Activated CD4-positive, alpha-beta T cell treated with anti-CD3 and anti-CD28 coated beads for 36 hours (primary cell): ENCODE measurements at regions of chr10 and their contacts with region 1.

Region 1: DNA sequence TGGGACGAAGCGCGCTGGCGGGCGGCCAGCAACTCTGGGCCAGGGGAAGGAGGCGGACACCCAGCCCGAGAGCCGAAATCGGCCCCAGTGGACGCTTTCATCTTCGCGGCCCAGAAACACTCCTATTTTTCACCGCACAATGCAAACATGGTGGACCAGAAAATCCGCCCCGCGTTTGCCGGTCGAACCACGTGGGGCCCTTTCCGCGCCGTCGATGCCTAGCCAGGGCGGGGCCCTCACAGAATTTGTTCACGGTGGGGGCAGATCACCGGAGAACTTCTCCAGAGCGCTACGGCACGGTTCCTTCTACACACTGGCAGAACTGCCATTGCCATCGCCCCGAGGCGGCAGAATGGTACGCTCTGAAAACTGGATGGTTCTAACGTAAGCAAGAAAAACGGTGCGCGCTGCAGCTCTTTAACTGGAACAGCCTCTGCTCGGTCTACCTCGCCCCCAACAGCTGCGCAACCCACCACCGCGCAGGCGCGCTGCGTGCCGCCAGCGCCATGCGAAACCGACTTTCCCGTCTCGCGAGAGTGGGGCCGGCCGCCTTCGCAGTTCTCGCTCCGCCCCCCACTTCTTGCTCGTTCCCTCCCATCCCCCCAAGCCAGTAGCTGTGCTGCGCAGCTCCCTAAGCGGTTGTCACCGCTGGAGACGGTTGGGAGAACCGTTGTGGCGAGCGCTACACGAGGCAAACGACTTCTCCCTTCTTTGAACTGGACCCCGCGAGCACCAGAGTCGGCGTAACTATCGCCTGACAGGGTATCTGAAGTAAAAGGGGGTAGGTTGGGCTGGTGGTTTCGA is at the start of gene HNRNPH3:
- DNase-seq: peak; percentile 99
- ATAC-seq: peak; percentile 88
- H3K4me3 Mint-ChIP-seq: peak within 1 kb of the TSS; percentile 97
- H3K27ac Mint-ChIP-seq: peak within 1 kb of the TSS; percentile 100
- H3K4me1 Mint-ChIP-seq: peaks cover 41% of the 10 kb centered on the region
- H3K27me3 Mint-ChIP-seq: no peaks in the 10 kb centered on the region
- total RNA-seq, gene HNRNPH3: 126 to 157 TPM

Region 2: GRCh38 chr10:67849331-67850011 is 482.2 kb before region 1 on chr10:
- CTCF ChIA-PET with region 1: no interaction called
- POLR2A ChIA-PET with region 1: no interaction called
- intact Hi-C with region 1: loop called in 1 of 2 experiments (anchors 1 kb)
- DNase-seq: peak; percentile 96
- ATAC-seq: peak; percentile 97
- H3K4me3 Mint-ChIP-seq: peak overlapping the region; percentile 86
- H3K27ac Mint-ChIP-seq: peak overlapping the region; percentile 95
- H3K4me1 Mint-ChIP-seq: peaks cover 12% of the 10 kb centered on the region
- H3K27me3 Mint-ChIP-seq: no peaks in the 10 kb centered on the region

Region 3: GRCh38 chr10:68074775-68075549 is 256.7 kb before region 1 on chr10 and contains the start of gene HERC4:
- CTCF ChIA-PET with region 1: no interaction called
- POLR2A ChIA-PET with region 1: no interaction called
- intact Hi-C with region 1: loop called (anchors 1 to 2 kb)
- DNase-seq: peak; percentile 94
- ATAC-seq: peak; percentile 83
- H3K4me3 Mint-ChIP-seq: peak within 1 kb of the TSS; percentile 98
- H3K27ac Mint-ChIP-seq: peak within 1 kb of the TSS; percentile 93
- H3K4me1 Mint-ChIP-seq: peaks cover 31% of the 10 kb centered on the region
- H3K27me3 Mint-ChIP-seq: no peaks in the 10 kb centered on the region
- total RNA-seq, gene HERC4: 39.5 to 50.8 TPM

Region 4: GRCh38 chr10:68348265-68348741 is 16.6 kb after region 1 on chr10:
- CTCF ChIA-PET with region 1: interaction called, 13 read pairs
- POLR2A ChIA-PET with region 1: interaction called, 29 read pairs
- intact Hi-C with region 1: loop called in 1 of 2 experiments (anchors 1 kb)
- DNase-seq: peak; percentile 63
- ATAC-seq: peak; percentile 73
- H3K4me3 Mint-ChIP-seq: no peak overlapping the region
- H3K27ac Mint-ChIP-seq: peak overlapping the region; percentile 51
- H3K4me1 Mint-ChIP-seq: peaks cover 7% of the 10 kb centered on the region
- H3K27me3 Mint-ChIP-seq: no peaks in the 10 kb centered on the region

Region 5: DNA sequence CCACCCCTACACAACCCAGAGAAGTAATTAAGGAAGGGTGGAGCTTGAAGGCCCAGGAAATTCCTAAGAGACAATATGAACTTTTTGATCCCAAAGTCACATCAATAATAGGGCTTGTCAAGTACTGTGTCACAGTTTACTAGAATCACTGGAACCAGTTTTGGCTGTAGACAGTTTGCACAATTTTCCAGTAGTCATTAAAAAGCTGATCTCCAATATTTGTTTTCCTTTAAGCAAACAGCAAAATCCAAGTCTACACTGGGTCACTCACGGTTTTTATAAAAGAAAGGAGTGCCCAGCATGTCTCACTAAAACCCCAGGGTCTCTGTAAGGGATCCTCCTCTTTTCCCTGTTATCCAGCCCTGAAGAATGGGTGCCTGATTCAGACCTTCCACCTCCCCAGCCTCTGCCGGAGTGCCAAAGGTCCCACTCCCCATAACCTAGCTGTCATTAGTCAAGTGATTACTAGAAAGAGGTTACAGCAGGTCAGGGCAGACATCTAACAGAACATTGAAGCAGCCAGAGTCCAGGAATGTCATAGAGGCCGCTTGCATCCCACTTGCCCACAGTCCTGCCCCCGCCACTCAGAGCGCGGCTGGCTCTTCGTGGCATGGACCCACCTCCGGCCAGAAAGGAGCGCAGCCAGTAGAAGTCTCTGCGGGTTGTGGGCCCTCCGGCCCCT is 195.1 kb after region 1 on chr10:
- CTCF ChIA-PET with region 1: no interaction called
- POLR2A ChIA-PET with region 1: interaction called, 3 read pairs
- intact Hi-C with region 1: loop called in 1 of 2 experiments (anchors 1 kb)
- DNase-seq: no peak
- ATAC-seq: peak; percentile 16
- H3K4me3 Mint-ChIP-seq: peak overlapping the region; percentile 93
- H3K27ac Mint-ChIP-seq: peak overlapping the region; percentile 88
- H3K4me1 Mint-ChIP-seq: peaks cover 9% of the 10 kb centered on the region
- H3K27me3 Mint-ChIP-seq: no peaks in the 10 kb centered on the region

Region 6: GRCh38 chr10:68955832-68956532 is 624.3 kb after region 1 on chr10 and contains the start of gene DDX21:
- CTCF ChIA-PET with region 1: no interaction called
- POLR2A ChIA-PET with region 1: no interaction called
- intact Hi-C with region 1: loop called in 1 of 2 experiments (anchors 2 kb)
- DNase-seq: peak; percentile 94
- ATAC-seq: peak; percentile 85
- H3K4me3 Mint-ChIP-seq: peak within 1 kb of the TSS; percentile 98
- H3K27ac Mint-ChIP-seq: peak within 1 kb of the TSS; percentile 100
- H3K4me1 Mint-ChIP-seq: peaks cover 35% of the 10 kb centered on the region
- H3K27me3 Mint-ChIP-seq: no peaks in the 10 kb centered on the region
- total RNA-seq, gene DDX21: 187 to 192 TPM